ENCODE measurements at regions of chr2 and their contacts with region 1.

Region 1: DNA sequence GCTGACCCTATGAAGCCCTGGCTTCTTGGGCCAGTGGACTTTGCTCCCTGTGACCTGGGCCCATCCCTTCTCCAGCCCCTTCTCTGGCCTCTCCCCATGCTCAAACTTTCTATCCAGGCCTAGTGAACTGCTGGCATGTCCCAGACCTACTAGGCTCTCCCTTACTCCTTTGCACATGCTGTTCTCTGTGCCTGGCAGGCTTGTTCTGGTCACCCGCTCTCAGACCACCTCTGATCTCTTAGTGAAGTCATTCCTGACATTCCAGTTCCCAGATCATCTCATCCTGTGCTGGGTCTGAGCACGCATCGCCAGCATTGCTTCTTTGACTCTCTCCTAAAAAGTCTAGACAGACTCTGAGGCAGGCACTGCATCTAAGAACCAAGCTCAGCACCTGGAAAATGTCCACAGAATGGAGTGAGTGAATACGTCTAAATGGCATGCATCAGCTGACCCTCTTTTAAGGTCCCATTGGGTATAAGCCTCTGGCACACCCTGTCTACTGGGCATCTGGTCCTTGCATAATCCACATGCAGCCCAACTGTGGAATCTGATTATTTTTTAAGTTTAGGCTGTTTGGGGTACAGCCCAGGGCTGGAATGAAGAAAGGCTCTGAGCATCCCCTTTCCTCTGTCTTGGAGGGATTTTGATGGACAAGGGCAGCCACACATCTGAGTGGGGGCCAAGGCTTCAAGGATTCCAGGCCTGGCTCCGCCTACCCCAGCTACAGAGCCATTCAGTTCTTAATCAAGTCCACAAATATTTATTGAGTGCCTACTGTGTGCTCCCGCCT is 130.6 kb upstream of the HAAO start:
- DNase-seq: peak; percentile 42
- ATAC-seq: no peak
- H3K4me3 ChIP-seq: peak overlapping the region in 1 of 3 experiments; percentile 8; a peak in 1 of 6 replicates
- H3K27ac ChIP-seq: no peak overlapping the region
- H3K4me1 ChIP-seq: peaks cover 69% of the 10 kb centered on the region
- H3K27me3 ChIP-seq: peaks cover 0 to 7% of the 10 kb centered on the region in 2 experiments; a peak in 2 of 5 replicates
- CTCF ChIP-seq: no peak
- EP300 ChIP-seq: no peak
- POLR2A ChIP-seq: no peak
- RAD21 ChIP-seq: no peak

Region 2: GRCh38 chr2:41061356-41061755 is 1861.6 kb before region 1 on chr2:
- CTCF ChIA-PET with region 1: no interaction called
- POLR2A ChIA-PET with region 1: no interaction called
- in situ Hi-C with region 1: no loop called
- intact Hi-C with region 1: no loop called
- DNase-seq: no peak
- ATAC-seq: no peak
- H3K4me3 ChIP-seq: no peak overlapping the region
- H3K27ac ChIP-seq: no peak overlapping the region
- H3K4me1 ChIP-seq: no peaks in the 10 kb centered on the region
- H3K27me3 ChIP-seq: no peaks in the 10 kb centered on the region
- CTCF ChIP-seq: no peak
- EP300 ChIP-seq: no peak
- POLR2A ChIP-seq: no peak
- RAD21 ChIP-seq: no peak

Region 3: GRCh38 chr2:42792583-42793333 is 130.2 kb before region 1 on chr2 and contains the start of gene HAAO:
- CTCF ChIA-PET with region 1: no interaction called
- POLR2A ChIA-PET with region 1: interaction called, 11 read pairs
- in situ Hi-C with region 1: no loop called
- intact Hi-C with region 1: no loop called
- DNase-seq: peak; percentile 91
- ATAC-seq: peak; percentile 71
- H3K4me3 ChIP-seq: peak within 1 kb of the TSS; percentile 98 to 99 (median 99)
- H3K27ac ChIP-seq: peak within 1 kb of the TSS; percentile 95
- H3K4me1 ChIP-seq: peaks cover 73% of the 10 kb centered on the region
- H3K27me3 ChIP-seq: no peaks in the 10 kb centered on the region; a peak in 1 of 5 replicates
- CTCF ChIP-seq: peak; percentile 55
- EP300 ChIP-seq: peak; percentile 91 to 95
- POLR2A ChIP-seq: peak in 1 of 2 experiments; percentile 97; a peak in 2 of 4 replicates
- RAD21 ChIP-seq: peak; percentile 88
- total RNA-seq, gene HAAO: 34.1 and 42.7 TPM in 2 replicates

Region 4: DNA sequence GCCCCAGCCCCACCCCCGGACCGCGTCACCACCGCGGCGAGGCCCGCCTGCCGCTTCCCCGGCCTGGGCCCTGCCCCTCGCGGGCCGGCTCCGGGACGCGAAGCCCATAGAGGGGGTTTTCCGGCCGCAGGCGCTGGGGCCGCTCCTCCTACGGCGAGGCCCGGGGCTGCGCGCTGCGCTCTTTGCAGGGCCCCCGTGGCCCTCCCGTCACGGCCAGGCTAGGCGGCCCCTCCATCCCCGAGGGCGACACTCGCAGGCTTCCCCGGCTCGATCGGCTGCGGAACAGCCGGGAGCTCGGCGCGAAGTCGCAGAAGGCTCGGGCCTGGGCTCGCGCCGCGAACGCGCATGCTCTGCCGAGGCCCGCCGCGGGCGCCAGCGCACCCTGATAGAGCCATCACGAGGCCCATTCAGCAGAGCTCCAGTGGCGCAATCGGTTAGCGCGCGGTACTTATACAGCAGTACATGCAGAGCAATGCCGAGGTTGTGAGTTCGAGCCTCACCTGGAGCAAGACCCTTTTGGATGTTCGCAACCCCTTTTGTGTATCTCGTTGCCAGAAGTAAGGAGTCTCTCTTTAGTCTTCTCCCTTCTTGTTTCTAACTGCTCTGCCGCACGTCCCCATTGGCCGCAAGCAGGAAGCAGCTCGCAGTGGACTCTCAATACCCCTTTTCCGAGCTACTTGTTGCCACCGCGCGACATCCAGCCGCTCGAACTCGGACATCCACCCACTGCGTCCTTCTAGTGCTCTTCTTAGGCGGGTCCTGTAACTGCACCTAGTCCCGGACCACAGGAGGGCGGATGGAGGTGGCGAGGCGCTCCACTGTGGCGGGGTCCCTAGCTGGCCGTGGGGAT is 112.6 kb before region 1 on chr2:
- CTCF ChIA-PET with region 1: no interaction called
- POLR2A ChIA-PET with region 1: interaction called, 19 read pairs
- in situ Hi-C with region 1: no loop called
- intact Hi-C with region 1: no loop called
- DNase-seq: peak; percentile 94
- ATAC-seq: peak; percentile 84
- H3K4me3 ChIP-seq: peak overlapping the region; percentile 79 to 93 (median 80)
- H3K27ac ChIP-seq: peak overlapping the region; percentile 98
- H3K4me1 ChIP-seq: peaks cover 19% of the 10 kb centered on the region
- H3K27me3 ChIP-seq: no peaks in the 10 kb centered on the region; a peak in 2 of 5 replicates
- CTCF ChIP-seq: 0 out of 2 replicates have a peak, but pooled peaks have one; percentile 31
- EP300 ChIP-seq: peak; percentile 34 to 36; a peak in 2 of 4 replicates
- POLR2A ChIP-seq: peak; percentile 82 to 95
- RAD21 ChIP-seq: peak; percentile 52; the same call in 1 of the 2 replicates

Region 5: DNA sequence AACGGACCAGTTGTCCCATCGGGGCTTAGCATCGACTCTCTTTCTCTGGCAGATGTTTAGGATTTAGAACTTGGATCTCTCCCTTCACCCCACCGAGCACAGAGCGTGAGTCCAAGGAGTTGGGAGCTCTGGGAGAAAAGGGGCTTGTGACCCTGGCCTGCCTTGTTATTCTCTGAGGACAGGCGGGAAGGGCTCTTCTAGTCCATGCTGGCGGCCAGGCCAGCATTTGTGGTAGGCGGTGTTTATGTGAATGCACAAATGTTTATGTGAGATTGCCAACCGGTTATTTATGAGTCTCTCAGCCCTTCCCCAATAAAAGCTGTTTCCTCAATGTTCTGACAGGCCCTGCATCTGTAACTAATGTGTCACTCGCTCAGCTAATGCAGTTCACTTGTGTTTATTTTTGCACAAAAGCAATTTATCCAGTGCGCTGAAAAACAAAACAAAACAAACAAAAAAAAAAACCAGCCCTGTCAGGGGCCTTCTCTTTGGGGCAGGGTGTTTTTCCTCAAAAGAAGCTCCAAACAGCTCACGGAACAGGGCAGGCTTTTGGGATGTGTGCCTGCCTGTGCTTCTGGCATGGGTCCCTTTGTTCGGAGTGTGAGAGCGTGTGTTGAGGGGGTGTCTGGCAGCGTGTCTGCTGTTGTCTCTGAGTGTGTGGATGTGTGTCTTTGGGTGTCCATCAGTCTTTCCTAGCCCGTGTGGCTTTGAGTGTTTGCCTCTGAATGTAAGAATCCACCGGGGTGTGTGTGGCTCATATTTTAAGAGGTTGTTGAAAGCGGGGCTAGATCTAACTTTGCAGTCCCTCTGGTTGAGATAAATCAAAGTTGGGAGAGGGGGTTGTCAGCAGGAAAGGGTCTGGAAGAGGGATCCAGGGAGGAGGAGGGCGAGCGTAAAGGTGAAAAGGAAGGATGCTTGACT is 77.8 kb before region 1 on chr2:
- CTCF ChIA-PET with region 1: no interaction called
- POLR2A ChIA-PET with region 1: no interaction called
- in situ Hi-C with region 1: no loop called
- intact Hi-C with region 1: no loop called
- DNase-seq: no peak
- ATAC-seq: no peak
- H3K4me3 ChIP-seq: no peak overlapping the region
- H3K27ac ChIP-seq: no peak overlapping the region
- H3K4me1 ChIP-seq: peaks cover 44% of the 10 kb centered on the region
- H3K27me3 ChIP-seq: peaks cover 2 to 37% of the 10 kb centered on the region in 2 experiments; a peak in 4 of 5 replicates
- CTCF ChIP-seq: no peak
- EP300 ChIP-seq: no peak
- POLR2A ChIP-seq: no peak
- RAD21 ChIP-seq: no peak

Region 6: GRCh38 chr2:42906557-42907411 is 16.2 kb before region 1 on chr2:
- CTCF ChIA-PET with region 1: no interaction called
- POLR2A ChIA-PET with region 1: interaction called, 15 read pairs
- in situ Hi-C with region 1: no loop called
- intact Hi-C with region 1: loop called (anchors 2 kb)
- DNase-seq: no peak
- ATAC-seq: peak; percentile 74
- H3K4me3 ChIP-seq: peak overlapping the region; percentile 49 to 62 (median 51)
- H3K27ac ChIP-seq: no peak overlapping the region
- H3K4me1 ChIP-seq: peaks cover 41% of the 10 kb centered on the region
- H3K27me3 ChIP-seq: peaks cover 9 to 69% of the 10 kb centered on the region in 2 experiments; a peak in 4 of 5 replicates
- CTCF ChIP-seq: no peak
- EP300 ChIP-seq: no peak
- POLR2A ChIP-seq: no peak
- RAD21 ChIP-seq: no peak

Region 7: GRCh38 chr2:42935692-42936681 is 13.0 kb after region 1 on chr2:
- CTCF ChIA-PET with region 1: no interaction called
- POLR2A ChIA-PET with region 1: interaction called, 169 read pairs
- in situ Hi-C with region 1: no loop called
- intact Hi-C with region 1: no loop called
- DNase-seq: no peak
- ATAC-seq: no peak
- H3K4me3 ChIP-seq: no peak overlapping the region
- H3K27ac ChIP-seq: no peak overlapping the region
- H3K4me1 ChIP-seq: peaks cover 94% of the 10 kb centered on the region
- H3K27me3 ChIP-seq: no peaks in the 10 kb centered on the region; a peak in 1 of 5 replicates
- CTCF ChIP-seq: no peak
- EP300 ChIP-seq: no peak
- POLR2A ChIP-seq: no peak
- RAD21 ChIP-seq: no peak

Measured in HepG2 (cell line).